ENCODE measurements at regions of chr17 and their contacts with region 1.

Region 1: GRCh38 chr17:47229535-47230443 is 20.6 kb downstream of the MYL4 start:
- DNase-seq: peak; percentile 77
- H3K4me3 ChIP-seq: peak overlapping the region; percentile 46
- H3K27ac ChIP-seq: peak overlapping the region; percentile 28
- H3K4me1 ChIP-seq: peaks cover 32% of the 10 kb centered on the region
- H3K27me3 ChIP-seq: no peaks in the 10 kb centered on the region
- CTCF ChIP-seq: peak; percentile 100

Region 2: GRCh38 chr17:47172698-47173565 is 56.9 kb before region 1 on chr17:
- intact Hi-C with region 1: no loop called
- DNase-seq: no peak
- H3K4me3 ChIP-seq: no peak overlapping the region
- H3K27ac ChIP-seq: no peak overlapping the region
- H3K4me1 ChIP-seq: peaks cover 56% of the 10 kb centered on the region
- H3K27me3 ChIP-seq: no peaks in the 10 kb centered on the region
- CTCF ChIP-seq: no peak

Region 3: DNA sequence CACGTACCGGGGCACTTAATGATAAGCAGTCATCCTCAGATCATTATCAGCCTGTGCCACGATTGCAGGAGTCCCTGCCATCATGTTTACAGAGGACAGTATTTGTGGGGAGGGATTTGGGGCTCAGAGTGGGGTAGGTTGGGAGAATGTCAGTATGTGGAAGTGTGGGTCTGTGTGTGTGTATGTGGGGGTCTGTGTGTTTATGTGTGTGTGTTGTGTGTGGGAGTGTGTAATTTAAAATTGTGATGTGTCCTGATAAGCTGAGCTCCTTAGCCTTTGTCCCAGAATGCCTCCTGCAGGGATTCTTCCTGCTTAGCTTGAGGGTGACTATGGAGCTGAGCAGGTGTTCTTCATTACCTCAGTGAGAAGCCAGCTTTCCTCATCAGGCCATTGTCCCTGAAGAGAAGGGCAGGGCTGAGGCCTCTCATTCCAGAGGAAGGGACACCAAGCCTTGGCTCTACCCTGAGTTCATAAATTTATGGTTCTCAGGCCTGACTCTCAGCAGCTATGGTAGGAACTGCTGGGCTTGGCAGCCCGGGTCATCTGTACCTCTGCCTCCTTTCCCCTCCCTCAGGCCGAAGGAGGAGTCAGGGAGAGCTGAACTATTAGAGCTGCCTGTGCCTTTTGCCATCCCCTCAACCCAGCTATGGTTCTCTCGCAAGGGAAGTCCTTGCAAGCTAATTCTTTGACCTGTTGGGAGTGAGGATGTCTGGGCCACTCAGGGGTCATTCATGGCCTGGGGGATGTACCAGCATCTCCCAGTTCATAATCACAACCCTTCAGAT is 80.6 kb after region 1 on chr17:
- intact Hi-C with region 1: loop called (anchors 5 kb)
- DNase-seq: no peak
- H3K4me3 ChIP-seq: no peak overlapping the region
- H3K27ac ChIP-seq: no peak overlapping the region
- H3K4me1 ChIP-seq: peaks cover 11% of the 10 kb centered on the region
- H3K27me3 ChIP-seq: no peaks in the 10 kb centered on the region
- CTCF ChIP-seq: no peak

Region 4: GRCh38 chr17:47615766-47616424 is 386.1 kb after region 1 on chr17:
- intact Hi-C with region 1: loop called (anchors 10 kb)
- DNase-seq: no peak
- H3K4me3 ChIP-seq: no peak overlapping the region
- H3K27ac ChIP-seq: no peak overlapping the region
- H3K4me1 ChIP-seq: peaks cover 28% of the 10 kb centered on the region
- H3K27me3 ChIP-seq: no peaks in the 10 kb centered on the region
- CTCF ChIP-seq: peak; percentile 79

Measured in left ventricle myocardium inferior (tissue), 1 donor.